ENCODE measurements at regions of chr14 and their contacts with region 1.

Region 1: GRCh38 chr14:70754989-70755388 is 54.3 kb downstream of the MAP3K9 start:
- DNase-seq: no peak
- ATAC-seq: no peak
- H3K4me3 ChIP-seq: no peak overlapping the region
- H3K27ac ChIP-seq: no peak overlapping the region
- H3K4me1 ChIP-seq: no peaks in the 10 kb centered on the region
- H3K27me3 ChIP-seq: no peaks in the 10 kb centered on the region
- CTCF ChIP-seq: no peak
- EP300 ChIP-seq: no peak
- POLR2A ChIP-seq: no peak
- RAD21 ChIP-seq: no peak

Region 2: DNA sequence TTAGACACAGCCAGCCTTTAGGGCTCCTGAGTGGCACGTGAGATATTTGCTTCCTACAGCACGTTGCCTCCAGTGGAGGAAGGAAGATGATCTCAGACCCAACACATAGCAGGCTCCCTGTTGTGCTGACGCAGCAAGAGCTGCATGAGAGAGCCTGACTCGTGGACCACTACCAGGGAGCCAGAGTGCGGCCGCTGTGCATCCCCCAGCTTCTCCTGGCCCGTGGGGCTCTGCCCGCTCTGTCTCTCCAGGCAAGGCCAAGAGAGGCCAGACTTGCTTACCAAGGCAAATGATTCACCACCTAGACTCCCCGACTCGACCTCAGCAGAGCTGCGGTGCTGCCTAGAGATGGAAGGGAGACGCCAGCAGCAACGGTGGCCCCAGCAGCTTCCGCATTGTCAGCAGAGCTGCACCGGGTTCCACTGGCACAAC is 16.8 kb after region 1 on chr14:
- CTCF ChIA-PET with region 1: no interaction called
- POLR2A ChIA-PET with region 1: no interaction called
- RAD21 ChIA-PET with region 1: no interaction called
- SMC1A ChIA-PET with region 1: interaction called, 14 read pairs
- in situ Hi-C with region 1: no loop called
- intact Hi-C with region 1: no loop called
- DNase-seq: no peak
- ATAC-seq: no peak
- H3K4me3 ChIP-seq: no peak overlapping the region
- H3K27ac ChIP-seq: no peak overlapping the region
- H3K4me1 ChIP-seq: peaks cover 10% of the 10 kb centered on the region
- H3K27me3 ChIP-seq: no peaks in the 10 kb centered on the region
- CTCF ChIP-seq: no peak
- EP300 ChIP-seq: no peak
- POLR2A ChIP-seq: no peak
- RAD21 ChIP-seq: no peak